Activated B cell treated with CpG ODN at 0.5 μM for 24 hours (primary cell): ENCODE measurements at regions of chr15 and their contacts with region 1.

Region 1: DNA sequence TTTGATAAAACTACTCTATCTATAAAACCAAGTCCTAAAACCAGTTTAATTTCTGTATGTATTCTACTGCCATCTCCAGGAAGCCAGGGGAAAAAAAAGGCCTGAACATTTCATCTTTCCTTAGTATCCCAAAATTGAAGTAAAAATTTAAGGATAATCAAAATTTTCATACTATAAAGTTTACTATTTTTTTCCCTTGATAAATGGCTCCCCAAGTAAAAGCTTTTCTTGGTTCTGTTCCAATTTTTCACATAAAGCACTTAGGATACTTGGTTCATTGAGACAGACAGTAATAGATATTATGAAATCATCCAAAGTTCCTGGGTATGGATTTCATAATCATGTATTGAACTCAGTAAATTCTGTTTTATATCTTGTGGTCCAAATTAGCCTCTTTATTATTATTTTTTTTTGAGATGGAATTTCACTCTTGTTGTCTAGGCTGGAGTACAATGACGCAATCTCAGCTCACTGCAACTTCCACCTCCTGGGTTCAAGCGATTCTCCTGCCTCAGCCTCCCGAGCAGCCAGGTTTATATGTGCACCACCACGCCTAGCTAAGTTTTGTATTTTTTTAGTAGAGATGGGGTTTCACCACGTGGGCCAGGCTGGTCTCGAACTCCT is 34.5 kb downstream of the ICE2 start:
- DNase-seq: no peak
- ATAC-seq: no peak
- H3K4me3 Mint-ChIP-seq: no peak overlapping the region
- H3K27ac Mint-ChIP-seq: no peak overlapping the region
- H3K4me1 Mint-ChIP-seq: no peaks in the 10 kb centered on the region
- H3K27me3 Mint-ChIP-seq: no peaks in the 10 kb centered on the region
- CTCF ChIP-seq: no peak

Region 2: GRCh38 chr15:60315878-60316277 is 128.5 kb before region 1 on chr15:
- CTCF ChIA-PET with region 1: no interaction called
- POLR2A ChIA-PET with region 1: no interaction called
- intact Hi-C with region 1: no loop called
- DNase-seq: no peak
- ATAC-seq: no peak
- H3K4me3 Mint-ChIP-seq: no peak overlapping the region
- H3K27ac Mint-ChIP-seq: no peak overlapping the region
- H3K4me1 Mint-ChIP-seq: no peaks in the 10 kb centered on the region
- H3K27me3 Mint-ChIP-seq: peaks cover 13% of the 10 kb centered on the region
- CTCF ChIP-seq: no peak

Region 3: DNA sequence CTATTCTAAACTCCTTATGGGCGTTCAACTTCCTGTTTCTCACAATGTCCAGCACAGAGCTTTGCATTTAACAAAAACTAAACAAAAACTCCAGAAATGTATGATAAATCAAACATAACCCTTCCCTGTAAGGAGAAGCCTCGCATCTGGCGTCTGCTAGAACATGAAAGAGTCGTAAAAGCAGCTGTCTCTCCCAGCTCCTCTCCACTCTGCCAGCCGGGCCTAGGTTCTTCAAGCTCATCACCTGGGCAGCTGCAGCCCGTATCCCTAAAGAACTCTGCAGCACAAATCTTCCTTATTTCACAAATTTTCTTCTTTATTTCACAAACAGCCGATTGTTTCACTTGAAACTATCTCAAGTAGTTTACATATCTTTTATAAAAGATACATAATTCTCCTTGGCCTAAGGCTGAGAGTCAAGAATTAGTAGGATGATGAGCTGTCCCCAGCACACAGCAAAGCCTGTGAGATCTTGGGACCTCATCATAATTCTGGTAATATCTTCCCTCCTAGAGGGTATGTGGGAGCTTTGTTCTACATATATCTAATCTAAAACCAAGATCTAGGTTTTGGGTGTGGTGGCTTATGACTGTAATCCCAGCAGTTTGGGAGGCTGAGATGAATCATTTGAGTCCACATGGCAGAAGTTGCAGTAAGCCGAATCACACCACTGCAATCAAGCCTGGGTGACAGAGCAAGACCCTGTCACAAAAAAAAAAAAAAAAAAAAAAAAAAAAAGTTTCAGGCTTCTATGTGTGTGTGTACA is 81.9 kb before region 1 on chr15:
- CTCF ChIA-PET with region 1: interaction called, 18 read pairs
- POLR2A ChIA-PET with region 1: no interaction called
- intact Hi-C with region 1: loop called (anchors 1 kb)
- DNase-seq: no peak
- ATAC-seq: no peak
- H3K4me3 Mint-ChIP-seq: no peak overlapping the region
- H3K27ac Mint-ChIP-seq: no peak overlapping the region
- H3K4me1 Mint-ChIP-seq: peaks cover 3% of the 10 kb centered on the region
- H3K27me3 Mint-ChIP-seq: no peaks in the 10 kb centered on the region
- CTCF ChIP-seq: no peak